Heart right ventricle (tissue), 16 donors: ENCODE measurements at regions of chr16 and their contacts with region 1.

Region 1: DNA sequence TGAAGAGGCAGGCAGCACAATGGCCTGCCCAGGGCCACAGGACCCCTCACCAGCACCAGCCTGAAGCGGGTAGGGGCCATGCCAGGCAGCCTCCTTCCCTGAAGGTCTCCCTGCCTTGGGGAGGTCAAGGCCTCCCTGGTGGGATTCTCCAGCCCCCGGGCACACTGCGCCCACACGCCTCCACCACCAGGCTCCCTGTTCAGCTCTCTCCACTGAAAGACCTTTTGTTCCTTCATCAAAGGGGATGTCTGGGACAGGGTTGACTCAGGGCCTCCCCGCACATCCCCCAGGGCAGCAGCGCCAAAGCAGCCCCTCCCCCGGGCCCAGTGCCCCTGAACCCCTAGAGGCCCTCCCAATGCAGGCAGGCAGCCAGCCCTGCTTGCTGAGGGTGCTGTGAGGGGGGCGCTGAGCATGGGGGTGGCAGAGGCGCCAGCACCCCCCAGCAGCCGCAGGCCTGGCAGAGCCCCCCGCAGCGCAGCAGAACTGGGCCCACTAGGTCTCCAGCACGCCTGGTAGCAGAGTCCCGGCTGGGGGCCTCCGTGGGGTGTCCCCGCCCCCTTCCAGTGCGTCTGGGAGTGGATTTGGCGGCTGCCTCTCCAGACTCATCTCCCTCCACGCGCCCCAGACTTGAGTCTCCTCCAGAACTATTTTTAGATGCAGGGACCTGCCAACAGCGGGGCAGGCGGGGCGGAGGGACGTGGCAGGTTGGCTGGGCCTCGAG is 13.1 kb downstream of the BCAR1 start:
- DNase-seq: peak; percentile 79 to 83
- ATAC-seq: peak; percentile 67 to 84 (median 80)
- H3K4me3 ChIP-seq: peak overlapping the region in 3 of 10 donors; percentile 7 to 15 (median 11)
- H3K27ac ChIP-seq: peak overlapping the region; percentile 43 to 90 (median 84)
- H3K4me1 ChIP-seq: peaks cover 37 to 86% (median 63%) of the 10 kb centered on the region in 9 donors
- H3K27me3 ChIP-seq: peaks cover 0 to 34% (median 0%) of the 10 kb centered on the region in 7 donors
- CTCF ChIP-seq: no peak

Region 2: GRCh38 chr16:75181630-75182029 is 56.7 kb before region 1 on chr16:
- intact Hi-C with region 1: no loop called
- DNase-seq: no peak
- ATAC-seq: no peak
- H3K4me3 ChIP-seq: no peak overlapping the region
- H3K27ac ChIP-seq: no peak overlapping the region
- H3K4me1 ChIP-seq: no peaks in the 10 kb centered on the region
- H3K27me3 ChIP-seq: no peaks in the 10 kb centered on the region
- CTCF ChIP-seq: no peak

Region 3: DNA sequence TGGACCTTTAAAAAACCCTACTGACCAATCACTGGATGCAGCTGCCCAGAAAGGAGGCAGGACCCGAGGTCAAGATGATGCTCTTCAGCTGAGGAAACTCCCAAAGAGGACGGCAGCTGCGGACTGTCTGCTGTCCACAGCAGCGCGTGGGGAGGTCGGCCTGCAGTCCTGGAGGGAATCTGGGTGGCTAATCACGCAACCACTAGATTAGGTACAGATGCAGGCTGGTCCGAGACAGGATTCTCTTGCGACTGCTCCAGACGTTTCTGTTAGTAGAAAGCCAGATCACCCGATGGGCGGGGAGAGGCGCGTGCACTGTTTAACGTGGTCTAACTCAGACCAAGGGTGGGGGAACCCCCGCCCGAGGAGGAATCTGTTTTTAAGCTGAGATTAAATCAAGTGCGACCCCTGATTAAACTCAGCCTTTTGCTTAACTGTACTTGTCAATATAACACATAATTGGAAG is 40.1 kb before region 1 on chr16:
- intact Hi-C with region 1: loop called in 1 of 10 experiments (anchors 5 kb)
- DNase-seq: no peak
- ATAC-seq: peak in 5 of 8 donors; percentile 14 to 35 (median 20)
- H3K4me3 ChIP-seq: peak overlapping the region in 1 of 10 donors; percentile 16
- H3K27ac ChIP-seq: no peak overlapping the region
- H3K4me1 ChIP-seq: peaks cover 0 to 12% (median 6%) of the 10 kb centered on the region in 9 donors
- H3K27me3 ChIP-seq: peaks cover 0 to 48% (median 13%) of the 10 kb centered on the region in 7 donors
- CTCF ChIP-seq: no peak

Region 4: DNA sequence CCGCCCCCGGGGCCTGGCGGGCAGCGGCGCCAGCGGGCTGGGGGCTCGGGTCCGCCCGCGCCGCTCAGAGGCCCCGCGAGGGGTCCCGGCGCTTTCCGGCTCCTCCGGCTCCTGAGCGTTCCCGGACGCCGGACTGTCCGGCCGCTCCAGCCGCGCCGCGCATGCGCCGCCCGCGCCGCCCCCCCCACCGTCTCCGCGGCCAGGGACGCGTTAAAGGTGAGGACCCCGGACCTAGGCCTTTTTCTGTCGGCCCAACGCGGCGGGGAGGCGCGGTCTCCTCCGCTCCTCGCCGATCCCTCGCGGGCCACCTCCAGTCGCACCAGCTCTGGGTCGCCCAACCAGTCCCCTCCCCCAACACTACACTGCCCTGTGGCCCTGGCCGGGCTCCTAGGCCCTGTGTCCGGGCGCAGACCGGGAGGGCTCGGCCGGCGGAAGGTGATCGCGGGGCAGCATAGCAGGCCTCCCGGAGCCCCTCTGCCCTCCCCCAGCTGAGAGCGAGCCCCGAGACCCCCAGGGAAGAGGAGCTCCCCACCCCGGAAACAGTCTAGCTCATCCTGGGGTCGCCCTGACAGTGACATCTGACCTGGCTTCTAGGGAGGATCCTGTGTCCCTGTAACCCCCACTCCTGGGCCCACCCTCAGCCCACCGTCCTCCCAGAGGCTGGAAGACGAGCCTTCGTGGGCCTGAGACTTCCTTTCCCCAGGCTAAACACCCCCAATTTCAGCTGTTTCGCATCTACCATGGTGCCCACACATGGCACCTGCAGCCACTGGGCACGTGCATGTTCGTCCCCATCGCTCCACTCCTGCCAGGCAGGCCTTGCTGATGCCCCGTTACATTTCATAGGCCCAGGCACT is 27.8 kb after region 1 on chr16:
- intact Hi-C with region 1: loop called in 1 of 10 experiments (anchors 1 kb)
- DNase-seq: peak; percentile 72 to 82
- ATAC-seq: peak; percentile 41 to 74 (median 56)
- H3K4me3 ChIP-seq: peak overlapping the region; percentile 70 to 100 (median 86)
- H3K27ac ChIP-seq: peak overlapping the region; percentile 92 to 99 (median 96)
- H3K4me1 ChIP-seq: peaks cover 32 to 66% (median 53%) of the 10 kb centered on the region in 9 donors
- H3K27me3 ChIP-seq: peaks cover 0 to 63% (median 0%) of the 10 kb centered on the region in 7 donors
- CTCF ChIP-seq: no peak

Region 5: GRCh38 chr16:75305364-75306098 is 67.2 kb after region 1 on chr16:
- intact Hi-C with region 1: loop called in 5 of 10 experiments (anchors 5 to 10 kb)
- DNase-seq: peak; percentile 41 to 63
- ATAC-seq: peak; percentile 80 to 94 (median 92)
- H3K4me3 ChIP-seq: peak overlapping the region in 3 of 10 donors; percentile 3 to 5 (median 4)
- H3K27ac ChIP-seq: peak overlapping the region; percentile 57 to 89 (median 83)
- H3K4me1 ChIP-seq: peaks cover 14 to 35% (median 29%) of the 10 kb centered on the region in 9 donors
- H3K27me3 ChIP-seq: peaks cover 0 to 18% (median 0%) of the 10 kb centered on the region in 7 donors
- CTCF ChIP-seq: peak in 1 of 9 donors; percentile 15

Region 6: DNA sequence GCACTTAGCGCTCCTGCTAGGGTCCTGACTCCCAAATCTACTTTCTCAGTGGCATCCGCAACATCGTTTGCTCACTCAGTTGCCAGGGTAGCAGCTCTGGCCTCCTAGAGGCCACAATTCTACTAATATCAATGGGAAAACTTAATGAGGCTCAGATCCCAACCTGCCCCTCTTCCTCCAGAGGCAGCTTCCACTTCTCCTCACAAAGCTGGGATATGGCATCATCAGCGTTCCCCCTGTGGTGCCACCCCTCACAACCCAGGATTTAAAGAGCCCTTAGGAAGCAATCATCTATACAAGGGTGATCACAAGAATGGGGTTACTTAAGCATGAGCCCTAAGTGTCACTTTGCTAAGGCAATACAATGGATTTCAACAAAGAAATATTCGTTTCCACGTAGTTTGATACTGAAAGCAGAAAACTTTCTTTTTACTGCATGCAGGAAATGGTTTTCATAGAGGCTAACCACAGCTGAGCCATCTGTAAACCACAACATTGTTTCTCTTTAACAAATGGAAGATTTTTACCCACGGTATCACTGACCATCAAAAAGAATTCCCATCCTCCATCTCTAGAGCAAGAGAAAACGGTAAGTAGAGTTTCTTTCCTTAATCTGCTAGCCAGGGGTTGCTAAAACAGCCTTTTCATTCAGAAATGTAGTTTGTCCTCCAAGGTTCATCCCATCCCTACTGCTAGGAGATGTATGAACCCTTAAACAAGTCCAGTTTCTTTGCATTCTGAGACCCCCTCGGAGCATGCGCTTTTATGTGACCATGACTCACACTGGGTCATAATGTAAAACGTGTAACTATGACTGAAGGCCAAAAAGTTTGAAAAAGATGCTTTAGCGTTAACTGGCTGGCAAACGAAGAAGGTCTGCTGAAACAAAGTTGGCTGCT is 81.5 kb after region 1 on chr16:
- intact Hi-C with region 1: loop called in 2 of 10 experiments (anchors 10 kb)
- DNase-seq: no peak
- ATAC-seq: no peak
- H3K4me3 ChIP-seq: no peak overlapping the region
- H3K27ac ChIP-seq: peak overlapping the region in 5 of 10 donors; percentile 8 to 77 (median 24)
- H3K4me1 ChIP-seq: peaks cover 0 to 47% (median 8%) of the 10 kb centered on the region in 9 donors
- H3K27me3 ChIP-seq: peaks cover 0 to 71% (median 0%) of the 10 kb centered on the region in 7 donors
- CTCF ChIP-seq: no peak

Region 7: DNA sequence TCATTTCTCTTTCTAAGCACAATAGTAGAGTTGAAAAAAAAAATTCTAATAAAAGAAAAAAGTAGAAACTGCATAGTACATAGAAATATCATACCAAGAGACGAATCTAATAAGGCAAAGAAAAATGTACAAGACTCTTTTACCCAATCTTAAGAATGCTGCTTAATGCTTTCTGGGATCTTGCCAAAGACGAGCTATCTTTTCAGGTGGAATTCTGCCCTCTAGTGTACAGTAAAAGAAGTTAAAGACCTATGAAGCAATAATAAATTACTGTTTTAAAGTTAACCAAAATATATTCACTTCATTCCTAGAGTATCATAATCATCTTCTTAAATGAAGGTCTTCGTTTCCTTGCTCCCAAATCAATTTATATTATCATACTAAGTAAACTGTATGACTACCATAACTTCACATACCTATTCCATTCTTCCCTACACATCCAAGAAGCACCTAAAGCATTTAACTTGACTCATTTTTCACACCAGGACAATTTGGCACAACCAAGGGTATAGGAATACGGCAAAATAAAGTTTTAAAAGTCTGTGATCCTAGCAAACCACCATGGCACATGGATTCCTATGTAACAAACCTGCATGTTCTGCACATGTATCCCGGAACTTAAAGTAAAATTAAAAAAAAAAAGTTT is 147.3 kb after region 1 on chr16:
- intact Hi-C with region 1: loop called (anchors 1 to 5 kb)
- DNase-seq: peak in 1 of 2 donors; percentile 36
- ATAC-seq: peak in 1 of 8 donors; percentile 50
- H3K4me3 ChIP-seq: no peak overlapping the region
- H3K27ac ChIP-seq: no peak overlapping the region
- H3K4me1 ChIP-seq: peaks cover 0 to 50% (median 20%) of the 10 kb centered on the region in 9 donors
- H3K27me3 ChIP-seq: peaks cover 0 to 32% (median 0%) of the 10 kb centered on the region in 7 donors
- CTCF ChIP-seq: peak; percentile 67 to 84 (median 72)

Region 8: DNA sequence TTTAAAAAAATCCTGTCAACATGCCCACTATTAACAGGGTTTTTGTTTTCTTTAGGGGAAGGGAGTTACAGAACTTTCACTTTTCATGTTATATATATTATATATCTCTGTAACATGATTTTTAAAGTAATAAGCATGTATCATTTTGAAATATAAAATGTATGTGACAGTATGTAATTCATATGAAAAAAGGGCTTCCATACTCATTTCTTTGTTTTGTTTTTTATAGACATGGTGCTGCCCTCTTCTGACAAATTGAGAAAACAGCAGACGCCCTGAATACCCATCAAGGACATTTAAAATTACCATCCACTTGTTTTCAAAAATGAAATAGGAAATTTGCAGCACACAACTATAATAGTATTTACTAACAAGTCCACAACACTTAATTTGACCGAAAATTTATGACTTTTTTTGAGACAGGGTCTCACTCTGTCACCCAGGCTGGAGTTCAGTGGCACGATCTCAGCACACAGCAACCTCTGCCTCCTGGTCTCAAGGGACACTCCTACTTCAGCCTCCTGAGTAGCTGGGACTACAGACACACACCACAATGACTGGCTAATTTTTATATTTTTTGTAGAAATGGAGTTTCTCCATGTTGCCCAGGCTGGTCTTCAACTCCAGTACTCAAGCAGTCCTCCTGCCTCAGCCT is 164.7 kb after region 1 on chr16:
- intact Hi-C with region 1: loop called in 1 of 10 experiments (anchors 5 kb)
- DNase-seq: no peak
- ATAC-seq: peak in 5 of 8 donors; percentile 30 to 69 (median 56)
- H3K4me3 ChIP-seq: no peak overlapping the region
- H3K27ac ChIP-seq: peak overlapping the region in 8 of 10 donors; percentile 28 to 86 (median 74)
- H3K4me1 ChIP-seq: peaks cover 0 to 28% (median 25%) of the 10 kb centered on the region in 9 donors
- H3K27me3 ChIP-seq: no peaks in the 10 kb centered on the region
- CTCF ChIP-seq: peak; percentile 53 to 82 (median 74)